ENCODE measurements at regions of chr15 and their contacts with region 1.

Region 1: DNA sequence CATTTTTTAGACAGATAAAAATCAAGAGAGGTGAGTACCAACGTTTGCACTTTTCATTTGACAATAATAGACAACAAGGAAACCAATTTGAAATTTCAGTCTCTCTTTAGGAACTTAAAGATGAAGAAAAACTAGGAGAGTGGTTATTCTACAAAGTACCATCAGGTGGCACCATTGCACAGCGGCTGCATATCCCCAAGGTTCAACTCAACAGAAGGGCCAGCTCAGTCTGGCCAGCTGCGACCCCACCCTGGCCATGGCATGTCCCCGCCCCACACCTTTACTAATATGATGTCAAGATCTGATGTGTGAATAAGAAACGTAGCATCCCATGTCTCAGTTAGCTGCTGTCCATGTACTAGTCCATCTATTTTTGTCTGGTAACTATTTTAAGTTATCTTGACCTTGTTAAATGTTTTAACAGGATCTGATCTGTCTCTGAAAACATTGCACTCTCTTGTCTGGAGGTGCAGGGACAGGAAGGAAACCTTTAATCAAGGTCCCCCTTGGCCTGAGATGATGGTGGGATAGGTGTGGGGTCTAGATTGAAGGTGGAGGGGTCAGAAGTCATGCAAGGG is 35.5 kb upstream of the CGNL1 start:
- DNase-seq: peak; percentile 61 to 62
- H3K4me3 ChIP-seq: no peak overlapping the region
- H3K4me3 Mint-ChIP-seq: no peak overlapping the region
- H3K27ac Mint-ChIP-seq: no peak overlapping the region
- H3K4me1 ChIP-seq: no peaks in the 10 kb centered on the region
- H3K4me1 Mint-ChIP-seq: peaks cover 6% of the 10 kb centered on the region
- H3K27me3 ChIP-seq: no peaks in the 10 kb centered on the region
- H3K27me3 Mint-ChIP-seq: no peaks in the 10 kb centered on the region
- CTCF ChIP-seq: peak; percentile 81 to 89

Region 2: GRCh38 chr15:57375827-57376695 is 35.3 kb after region 1 on chr15 and contains the start of gene CGNL1:
- CTCF ChIA-PET with region 1: interaction called, 6 read pairs
- POLR2A ChIA-PET with region 1: no interaction called
- intact Hi-C with region 1: loop called (anchors 2 kb)
- DNase-seq: peak in 1 of 2 experiments; percentile 75
- H3K4me3 ChIP-seq: peak within 1 kb of the TSS; percentile 79
- H3K4me3 Mint-ChIP-seq: peak within 1 kb of the TSS; percentile 89
- H3K27ac Mint-ChIP-seq: peak within 1 kb of the TSS; percentile 53
- H3K4me1 ChIP-seq: peaks cover 15% of the 10 kb centered on the region
- H3K4me1 Mint-ChIP-seq: peaks cover 18% of the 10 kb centered on the region
- H3K27me3 ChIP-seq: no peaks in the 10 kb centered on the region
- H3K27me3 Mint-ChIP-seq: no peaks in the 10 kb centered on the region
- CTCF ChIP-seq: no peak
- total RNA-seq, gene CGNL1: 8.3 and 9.4 TPM in 2 replicates

Region 3: GRCh38 chr15:57462381-57462780 is 121.6 kb after region 1 on chr15:
- CTCF ChIA-PET with region 1: no interaction called
- POLR2A ChIA-PET with region 1: no interaction called
- intact Hi-C with region 1: loop called (anchors 5 kb)
- DNase-seq: no peak
- H3K4me3 ChIP-seq: no peak overlapping the region
- H3K4me3 Mint-ChIP-seq: no peak overlapping the region
- H3K27ac Mint-ChIP-seq: no peak overlapping the region
- H3K4me1 ChIP-seq: no peaks in the 10 kb centered on the region
- H3K4me1 Mint-ChIP-seq: no peaks in the 10 kb centered on the region
- H3K27me3 ChIP-seq: no peaks in the 10 kb centered on the region
- H3K27me3 Mint-ChIP-seq: no peaks in the 10 kb centered on the region
- CTCF ChIP-seq: no peak

Region 4: DNA sequence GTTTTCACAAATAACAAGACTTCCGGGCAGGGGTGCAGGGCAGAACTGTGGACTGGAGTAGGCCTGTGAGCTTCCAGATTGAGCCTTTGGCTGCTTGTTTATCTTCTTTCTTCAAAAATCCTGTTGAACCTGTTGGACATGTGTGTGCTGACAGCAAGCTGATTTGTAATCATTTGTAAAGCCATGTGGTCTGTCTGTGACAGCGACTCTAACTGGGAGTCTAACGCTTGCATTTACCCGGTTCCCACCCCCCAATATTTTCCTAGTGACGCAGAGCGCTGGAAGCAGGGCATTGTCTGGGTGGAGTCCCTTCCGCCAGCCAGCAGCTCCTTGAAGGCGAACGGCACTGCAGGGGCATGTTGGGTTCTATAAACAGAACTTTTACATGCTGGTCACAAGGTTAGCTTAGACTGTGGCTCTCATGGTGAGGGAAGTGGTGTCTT is 165.2 kb after region 1 on chr15:
- CTCF ChIA-PET with region 1: interaction called, 16 read pairs
- POLR2A ChIA-PET with region 1: no interaction called
- intact Hi-C with region 1: loop called (anchors 1 kb)
- DNase-seq: peak; percentile 90 to 93
- H3K4me3 ChIP-seq: no peak overlapping the region
- H3K4me3 Mint-ChIP-seq: peak overlapping the region; percentile 64
- H3K27ac Mint-ChIP-seq: peak overlapping the region; percentile 90
- H3K4me1 ChIP-seq: peaks cover 66% of the 10 kb centered on the region
- H3K4me1 Mint-ChIP-seq: peaks cover 60% of the 10 kb centered on the region
- H3K27me3 ChIP-seq: no peaks in the 10 kb centered on the region
- H3K27me3 Mint-ChIP-seq: no peaks in the 10 kb centered on the region
- CTCF ChIP-seq: no peak

Region 5: GRCh38 chr15:57541805-57542504 is 201.2 kb after region 1 on chr15:
- CTCF ChIA-PET with region 1: interaction called, 18 read pairs
- POLR2A ChIA-PET with region 1: no interaction called
- intact Hi-C with region 1: loop called (anchors 1 kb)
- DNase-seq: peak; percentile 74 to 80
- H3K4me3 ChIP-seq: no peak overlapping the region
- H3K4me3 Mint-ChIP-seq: no peak overlapping the region
- H3K27ac Mint-ChIP-seq: no peak overlapping the region
- H3K4me1 ChIP-seq: 0 out of 2 replicates have a peak, but pooled peaks cover 3% of the 10 kb centered on the region
- H3K4me1 Mint-ChIP-seq: peaks cover 6% of the 10 kb centered on the region
- H3K27me3 ChIP-seq: no peaks in the 10 kb centered on the region
- H3K27me3 Mint-ChIP-seq: no peaks in the 10 kb centered on the region
- CTCF ChIP-seq: peak; percentile 76 to 84